CD4-positive, alpha-beta memory T cell (primary cell): ENCODE measurements at regions of chrX and their contacts with region 1.

Region 1: GRCh38 chrX:49043220-49043986 is at the start of gene TFE3:
- DNase-seq: peak; percentile 91 to 99 (median 96)
- H3K4me3 ChIP-seq: peak within 1 kb of the TSS in 1 of 2 donors; percentile 63
- H3K4me3 Mint-ChIP-seq: peak within 1 kb of the TSS; percentile 84 to 94 (median 89)
- H3K27ac ChIP-seq: peak within 1 kb of the TSS; percentile 93
- H3K27ac Mint-ChIP-seq: peak within 1 kb of the TSS; percentile 93 to 97 (median 96)
- H3K4me1 ChIP-seq: peaks cover 39% of the 10 kb centered on the region
- H3K4me1 Mint-ChIP-seq: peaks cover 18 to 47% (median 30%) of the 10 kb centered on the region in 4 donors
- H3K27me3 ChIP-seq: no peaks in the 10 kb centered on the region
- H3K27me3 Mint-ChIP-seq: no peaks in the 10 kb centered on the region
- total RNA-seq, gene TFE3: 35.5 to 37.6 TPM

Region 2: GRCh38 chrX:48648336-48648751 is 395.1 kb before region 1 on chrX:
- CTCF ChIA-PET with region 1: interaction called, 5 read pairs
- POLR2A ChIA-PET with region 1: no interaction called
- intact Hi-C with region 1: loop called (anchors 10 kb)
- DNase-seq: peak; percentile 46 to 62 (median 47)
- H3K4me3 ChIP-seq: no peak overlapping the region
- H3K4me3 Mint-ChIP-seq: no peak overlapping the region
- H3K27ac ChIP-seq: no peak overlapping the region
- H3K27ac Mint-ChIP-seq: peak overlapping the region in 4 of 7 donors; percentile 55 to 89 (median 74)
- H3K4me1 ChIP-seq: no peaks in the 10 kb centered on the region
- H3K4me1 Mint-ChIP-seq: peaks cover 0 to 8% (median 4%) of the 10 kb centered on the region in 4 donors
- H3K27me3 ChIP-seq: no peaks in the 10 kb centered on the region
- H3K27me3 Mint-ChIP-seq: no peaks in the 10 kb centered on the region

Region 3: DNA sequence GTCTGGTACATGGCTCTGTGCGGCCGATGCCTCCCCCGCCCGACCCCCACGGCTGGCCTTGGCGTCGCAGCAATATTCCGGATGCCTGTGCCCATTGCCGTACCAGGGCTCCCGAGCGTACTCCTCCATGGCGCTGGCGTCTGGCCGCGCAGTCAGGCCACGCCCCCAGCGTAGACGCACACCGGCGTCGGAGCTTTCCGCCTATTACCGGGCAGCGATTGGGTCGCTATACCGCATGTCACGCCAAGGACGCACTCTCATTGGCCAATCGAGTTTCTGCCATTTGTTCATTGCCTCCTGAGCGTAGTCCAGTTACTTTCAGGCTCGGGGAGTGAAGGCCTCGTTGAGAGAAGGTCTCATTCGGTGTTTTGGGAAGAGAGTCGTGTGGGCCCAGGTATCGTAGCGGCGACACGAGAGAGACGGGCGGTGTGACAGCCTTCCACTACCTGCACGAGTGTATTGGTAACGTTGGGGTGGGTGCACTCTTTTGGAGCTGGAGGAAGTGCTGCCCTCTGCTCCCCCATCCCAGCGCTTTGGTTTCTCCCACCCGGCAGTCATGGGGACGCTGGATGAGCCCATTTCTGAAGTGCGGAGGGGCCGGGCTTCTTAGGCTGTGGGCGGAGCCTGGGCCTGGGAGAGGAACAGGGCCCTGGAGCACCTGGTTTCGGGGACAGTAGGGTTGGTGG is 145.6 kb before region 1 on chrX and contains the starts of genes PQBP1 and TIMM17B:
- CTCF ChIA-PET with region 1: no interaction called
- POLR2A ChIA-PET with region 1: interaction called, 5 read pairs
- intact Hi-C with region 1: loop called (anchors 2 kb)
- DNase-seq: peak; percentile 88 to 93 (median 92)
- H3K4me3 ChIP-seq: peak within 1 kb of the TSS; percentile 78 to 92
- H3K4me3 Mint-ChIP-seq: peak within 1 kb of the TSS; percentile 86 to 96 (median 92)
- H3K27ac ChIP-seq: peak within 1 kb of the TSS; percentile 93
- H3K27ac Mint-ChIP-seq: peak within 1 kb of the TSS; percentile 88 to 99 (median 96)
- H3K4me1 ChIP-seq: peaks cover 24% of the 10 kb centered on the region
- H3K4me1 Mint-ChIP-seq: peaks cover 4 to 34% (median 17%) of the 10 kb centered on the region in 4 donors
- H3K27me3 ChIP-seq: no peaks in the 10 kb centered on the region
- H3K27me3 Mint-ChIP-seq: no peaks in the 10 kb centered on the region
- total RNA-seq, gene PQBP1: 59.6 to 64.4 TPM
- total RNA-seq, gene TIMM17B: 42.6 to 46.2 TPM

Region 4: GRCh38 chrX:48972220-48973167 is 70.9 kb before region 1 on chrX:
- CTCF ChIA-PET with region 1: interaction called, 23 read pairs
- POLR2A ChIA-PET with region 1: interaction called, 13 read pairs
- intact Hi-C with region 1: no loop called
- DNase-seq: peak in 3 of 5 donors; percentile 12 to 27 (median 23)
- H3K4me3 ChIP-seq: no peak overlapping the region
- H3K4me3 Mint-ChIP-seq: peak overlapping the region; percentile 25 to 71 (median 62)
- H3K27ac ChIP-seq: no peak overlapping the region
- H3K27ac Mint-ChIP-seq: peak overlapping the region in 6 of 7 donors; percentile 7 to 82 (median 42)
- H3K4me1 ChIP-seq: peaks cover 9% of the 10 kb centered on the region
- H3K4me1 Mint-ChIP-seq: peaks cover 7 to 23% (median 11%) of the 10 kb centered on the region in 4 donors
- H3K27me3 ChIP-seq: no peaks in the 10 kb centered on the region
- H3K27me3 Mint-ChIP-seq: no peaks in the 10 kb centered on the region

Region 5: DNA sequence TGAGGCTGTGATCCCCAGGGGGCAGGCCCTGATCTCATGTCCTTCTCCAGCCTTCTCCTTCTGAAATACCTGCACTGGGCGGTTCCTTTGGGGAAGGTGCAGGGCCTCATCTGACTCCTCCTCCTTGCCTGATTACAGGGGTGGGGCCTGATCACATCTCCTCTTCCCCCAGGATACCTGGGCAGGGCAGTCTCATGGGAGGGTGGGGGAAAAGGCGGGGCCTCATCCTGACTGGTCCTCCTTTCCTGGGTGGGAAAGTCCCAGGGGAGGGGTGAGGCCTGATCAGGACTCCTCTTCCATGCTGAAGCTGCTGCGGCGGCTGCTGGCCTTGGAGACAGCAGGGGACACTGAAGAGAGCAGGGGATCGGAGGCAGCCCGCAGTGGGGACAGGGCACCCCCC is 13.5 kb before region 1 on chrX:
- CTCF ChIA-PET with region 1: no interaction called
- POLR2A ChIA-PET with region 1: no interaction called
- intact Hi-C with region 1: loop called (anchors 1 kb)
- DNase-seq: no peak
- H3K4me3 ChIP-seq: no peak overlapping the region
- H3K4me3 Mint-ChIP-seq: no peak overlapping the region
- H3K27ac ChIP-seq: no peak overlapping the region
- H3K27ac Mint-ChIP-seq: no peak overlapping the region
- H3K4me1 ChIP-seq: no peaks in the 10 kb centered on the region
- H3K4me1 Mint-ChIP-seq: no peaks in the 10 kb centered on the region
- H3K27me3 ChIP-seq: no peaks in the 10 kb centered on the region
- H3K27me3 Mint-ChIP-seq: no peaks in the 10 kb centered on the region

Region 6: DNA sequence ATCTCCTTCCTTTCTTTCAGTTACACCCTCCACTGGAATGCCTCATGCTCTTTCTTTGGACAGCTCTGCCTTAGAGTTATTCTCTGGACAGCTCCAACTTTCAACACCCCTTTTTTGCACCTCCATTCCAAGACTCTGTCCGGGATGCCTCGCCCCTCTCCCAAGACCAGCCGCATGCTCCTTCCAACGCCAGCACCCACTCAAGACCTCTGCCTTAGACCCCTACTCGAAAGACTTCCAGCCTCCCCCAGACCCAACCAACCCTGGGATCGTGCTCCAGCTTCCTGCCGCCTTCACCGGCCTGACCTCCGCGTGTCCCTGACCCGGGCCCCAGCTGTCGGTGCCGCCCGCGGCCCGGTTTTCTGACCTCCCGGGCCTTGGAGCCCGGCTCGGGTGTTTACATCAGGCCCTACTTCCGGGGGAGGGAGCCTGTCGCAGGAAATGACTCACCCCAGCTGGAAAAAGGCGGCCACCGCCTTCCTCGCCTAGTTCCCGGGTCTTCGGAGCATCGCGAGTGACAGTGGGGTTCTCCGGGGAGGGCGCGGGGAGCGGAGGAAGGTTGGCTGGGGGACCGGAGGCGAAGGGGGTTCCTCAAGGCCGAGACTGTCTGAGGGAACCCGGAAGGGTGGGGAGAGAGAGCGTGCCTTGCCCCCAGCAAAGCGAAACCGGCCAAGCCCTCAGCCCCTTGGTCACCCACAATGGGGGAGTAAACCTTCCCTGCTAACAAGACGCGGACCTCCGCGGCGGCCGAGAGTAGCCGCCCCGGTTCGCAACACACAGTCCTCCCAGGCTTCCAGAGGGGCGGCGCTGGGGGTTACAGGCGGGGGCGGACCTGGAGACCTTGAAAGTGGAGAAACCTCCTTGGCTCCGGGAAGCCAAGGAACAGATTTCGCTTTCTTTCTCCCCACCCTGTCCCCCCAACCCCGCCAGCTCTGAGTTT is 36.4 kb after region 1 on chrX and contains the start of gene WDR45:
- CTCF ChIA-PET with region 1: no interaction called
- POLR2A ChIA-PET with region 1: interaction called, 13 read pairs
- intact Hi-C with region 1: loop called (anchors 1 kb)
- DNase-seq: peak; percentile 64 to 85 (median 71)
- H3K4me3 ChIP-seq: peak within 1 kb of the TSS; percentile 47 to 80
- H3K4me3 Mint-ChIP-seq: peak within 1 kb of the TSS; percentile 89 to 97 (median 96)
- H3K27ac ChIP-seq: peak within 1 kb of the TSS; percentile 96
- H3K27ac Mint-ChIP-seq: peak within 1 kb of the TSS; percentile 97 to 99 (median 99)
- H3K4me1 ChIP-seq: peaks cover 8% of the 10 kb centered on the region
- H3K4me1 Mint-ChIP-seq: peaks cover 4 to 15% (median 10%) of the 10 kb centered on the region in 4 donors
- H3K27me3 ChIP-seq: no peaks in the 10 kb centered on the region
- H3K27me3 Mint-ChIP-seq: no peaks in the 10 kb centered on the region
- total RNA-seq, gene WDR45: 102 to 126 TPM